ENCODE measurements at regions of chr7 and their contacts with region 1.

Region 1: GRCh38 chr7:133571076-133571475 is 318.2 kb downstream of the EXOC4 start:
- DNase-seq: no peak
- H3K4me3 ChIP-seq: no peak overlapping the region
- H3K27ac ChIP-seq: no peak overlapping the region
- H3K4me1 ChIP-seq: no peaks in the 10 kb centered on the region
- H3K27me3 ChIP-seq: no peaks in the 10 kb centered on the region
- CTCF ChIP-seq: no peak

Region 2: DNA sequence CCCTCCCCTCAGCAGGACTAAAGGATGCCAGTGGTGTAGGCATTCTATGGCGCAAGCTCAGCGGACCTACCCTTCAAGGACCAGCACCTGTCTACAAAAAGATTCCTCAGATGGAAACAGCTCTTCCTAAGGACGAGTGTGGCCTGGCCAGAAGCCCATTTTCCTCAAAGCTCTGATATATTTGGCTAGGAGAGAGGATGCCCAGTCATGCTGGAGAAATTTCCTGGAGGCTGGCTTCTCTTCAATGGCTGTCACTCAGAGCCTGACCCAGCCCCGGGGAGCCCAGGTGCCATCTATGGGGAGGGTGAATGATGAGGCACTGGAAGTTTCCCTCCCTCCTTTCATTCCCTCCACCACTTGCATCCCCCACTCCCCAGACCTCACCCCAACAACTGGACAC is 1106.3 kb before region 1 on chr7:
- intact Hi-C with region 1: no loop called
- DNase-seq: no peak
- H3K4me3 ChIP-seq: no peak overlapping the region
- H3K27ac ChIP-seq: no peak overlapping the region
- H3K4me1 ChIP-seq: peaks cover 0 to 4% (median 0%) of the 10 kb centered on the region in 3 donors
- H3K27me3 ChIP-seq: no peaks in the 10 kb centered on the region
- CTCF ChIP-seq: no peak

Region 3: GRCh38 chr7:133961724-133962123 is 390.6 kb after region 1 on chr7:
- intact Hi-C with region 1: loop called (anchors 5 kb)
- DNase-seq: no peak
- H3K4me3 ChIP-seq: no peak overlapping the region
- H3K27ac ChIP-seq: no peak overlapping the region
- H3K4me1 ChIP-seq: peaks cover 0 to 2% (median 0%) of the 10 kb centered on the region in 3 donors
- H3K27me3 ChIP-seq: no peaks in the 10 kb centered on the region
- CTCF ChIP-seq: no peak